ENCODE measurements at regions of chr1 and their contacts with region 1.

Region 1: GRCh38 chr1:7646981-7647901 is 123.9 kb upstream of the VAMP3 start:
- DNase-seq: peak in 1 of 2 experiments; percentile 92
- H3K4me3 ChIP-seq: no peak overlapping the region
- H3K27ac ChIP-seq: no peak overlapping the region
- H3K4me1 ChIP-seq: peaks cover 0 to 4% (median 0%) of the 10 kb centered on the region in 4 experiments; a peak in 2 of 7 replicates
- H3K27me3 ChIP-seq: no peaks in the 10 kb centered on the region
- CTCF ChIP-seq: peak; percentile 76 to 90 (median 81)
- EP300 ChIP-seq: no peak
- POLR2A ChIP-seq: no peak
- RAD21 ChIP-seq: peak; percentile 90 to 91

Region 2: DNA sequence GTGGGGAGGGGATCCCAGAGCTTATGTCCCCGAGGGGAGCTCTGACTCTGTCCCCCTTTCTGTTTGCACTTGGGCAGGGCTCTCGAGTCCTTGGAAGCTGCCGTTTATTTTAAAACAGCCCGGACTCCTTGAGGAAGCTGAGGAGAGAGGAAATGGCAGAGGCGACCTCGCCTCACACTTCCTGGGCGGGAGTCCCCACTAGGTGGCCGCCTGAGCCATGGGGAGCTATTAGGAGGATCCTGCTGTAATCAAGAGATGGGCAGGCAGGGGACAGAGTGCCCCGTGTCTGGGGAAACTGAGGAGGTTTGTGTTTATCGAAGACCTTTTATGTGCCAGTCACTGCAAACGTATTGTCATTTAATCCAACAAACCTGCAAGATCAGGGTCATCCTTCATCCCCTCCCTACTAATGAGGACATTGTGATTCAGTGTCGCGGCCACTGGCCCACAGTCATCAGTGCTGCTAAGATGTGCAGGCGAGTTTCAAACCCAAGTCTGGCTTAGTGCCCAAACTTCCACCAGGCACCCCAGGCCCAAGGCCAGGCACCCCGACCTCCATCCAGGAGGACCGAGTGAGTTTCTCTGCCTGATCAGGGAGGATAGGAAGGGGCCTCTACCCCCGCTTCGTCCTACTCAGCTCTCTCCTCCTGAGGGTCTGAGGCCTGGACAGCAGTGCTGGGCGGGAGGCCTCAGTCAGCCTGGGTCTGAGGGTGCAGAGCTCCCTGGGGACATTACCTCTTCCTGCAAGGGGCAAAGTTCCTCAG is 193.0 kb before region 1 on chr1:
- CTCF ChIA-PET with region 1: interaction called, 10 read pairs
- POLR2A ChIA-PET with region 1: no interaction called
- DNase-seq: no peak
- H3K4me3 ChIP-seq: no peak overlapping the region
- H3K27ac ChIP-seq: no peak overlapping the region
- H3K4me1 ChIP-seq: peaks cover 0 to 13% (median 5%) of the 10 kb centered on the region in 4 experiments; a peak in 5 of 7 replicates
- H3K27me3 ChIP-seq: no peaks in the 10 kb centered on the region
- CTCF ChIP-seq: peak; percentile 36 to 51 (median 42); a peak in 3 of 4 replicates
- EP300 ChIP-seq: no peak
- POLR2A ChIP-seq: no peak
- RAD21 ChIP-seq: peak; percentile 41 to 61; a peak in 3 of 4 replicates

Region 3: DNA sequence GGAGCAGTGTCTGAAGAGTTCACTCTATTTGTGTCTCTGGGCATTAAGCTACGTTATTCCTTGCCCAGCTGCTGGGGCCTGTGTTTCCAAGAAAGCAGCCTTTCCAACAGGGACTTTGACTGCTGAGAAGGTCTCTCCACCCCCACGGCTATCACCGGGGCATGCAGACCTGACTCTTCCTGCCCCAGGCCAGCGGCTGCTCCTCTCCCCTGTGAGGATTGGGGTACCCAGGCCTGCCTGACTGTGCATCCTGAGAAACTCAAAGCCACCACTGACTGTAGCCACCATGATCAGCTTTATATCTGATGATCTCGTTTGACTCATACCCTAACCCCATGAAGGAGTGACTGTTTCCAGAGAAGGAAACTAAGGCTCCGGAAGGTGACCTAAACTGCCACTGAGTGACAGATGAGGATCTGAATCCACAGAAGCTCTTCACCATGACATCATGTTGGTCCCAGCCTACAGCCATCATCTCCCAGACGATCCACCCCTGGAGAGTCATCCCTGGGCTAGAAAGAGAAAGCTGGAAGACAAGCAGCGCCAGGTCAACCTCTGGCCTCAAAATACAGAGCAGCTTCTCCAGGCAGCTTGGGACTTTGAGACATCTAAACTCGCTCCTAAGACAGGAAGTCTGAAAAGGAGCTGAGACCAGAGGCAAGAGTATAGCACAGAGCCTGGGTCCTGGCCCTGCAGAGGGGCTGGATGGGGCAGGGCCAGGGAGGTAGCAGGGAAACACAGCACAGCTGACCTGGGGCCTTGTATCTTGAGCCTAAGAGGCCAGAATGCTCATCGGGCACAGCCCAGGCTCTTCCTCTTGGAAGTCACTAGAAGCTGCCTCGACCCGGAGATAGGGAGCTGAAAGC is 120.1 kb before region 1 on chr1:
- CTCF ChIA-PET with region 1: no interaction called
- POLR2A ChIA-PET with region 1: no interaction called
- DNase-seq: no peak
- H3K4me3 ChIP-seq: no peak overlapping the region
- H3K27ac ChIP-seq: no peak overlapping the region; the same call in 1 of the 2 replicates
- H3K4me1 ChIP-seq: peaks cover 0 to 4% (median 2%) of the 10 kb centered on the region in 4 experiments; a peak in 3 of 7 replicates
- H3K27me3 ChIP-seq: no peaks in the 10 kb centered on the region
- CTCF ChIP-seq: no peak
- EP300 ChIP-seq: no peak
- POLR2A ChIP-seq: no peak
- RAD21 ChIP-seq: no peak

Region 4: GRCh38 chr1:7549277-7550161 is 97.7 kb before region 1 on chr1:
- CTCF ChIA-PET with region 1: interaction called, 11 read pairs
- POLR2A ChIA-PET with region 1: no interaction called
- DNase-seq: no peak
- H3K4me3 ChIP-seq: no peak overlapping the region
- H3K27ac ChIP-seq: no peak overlapping the region
- H3K4me1 ChIP-seq: peaks cover 0 to 14% (median 6%) of the 10 kb centered on the region in 4 experiments; a peak in 6 of 7 replicates
- H3K27me3 ChIP-seq: no peaks in the 10 kb centered on the region
- CTCF ChIP-seq: no peak
- EP300 ChIP-seq: no peak
- POLR2A ChIP-seq: no peak
- RAD21 ChIP-seq: no peak

Region 5: GRCh38 chr1:7576946-7577641 is 70.1 kb before region 1 on chr1:
- CTCF ChIA-PET with region 1: interaction called, 36 read pairs
- POLR2A ChIA-PET with region 1: no interaction called
- DNase-seq: no peak
- H3K4me3 ChIP-seq: no peak overlapping the region
- H3K27ac ChIP-seq: no peak overlapping the region
- H3K4me1 ChIP-seq: no peaks in the 10 kb centered on the region
- H3K27me3 ChIP-seq: no peaks in the 10 kb centered on the region; a peak in 1 of 7 replicates
- CTCF ChIP-seq: peak; percentile 31 to 43 (median 37); a peak in 3 of 4 replicates
- EP300 ChIP-seq: no peak
- POLR2A ChIP-seq: no peak
- RAD21 ChIP-seq: peak; percentile 46 to 51

Region 6: GRCh38 chr1:7628273-7628672 is 19.0 kb before region 1 on chr1:
- CTCF ChIA-PET with region 1: interaction called, 10 read pairs
- POLR2A ChIA-PET with region 1: no interaction called
- DNase-seq: no peak
- H3K4me3 ChIP-seq: no peak overlapping the region
- H3K27ac ChIP-seq: no peak overlapping the region
- H3K4me1 ChIP-seq: peaks cover 0 to 4% (median under 1%) of the 10 kb centered on the region in 4 experiments; a peak in 2 of 7 replicates
- H3K27me3 ChIP-seq: no peaks in the 10 kb centered on the region
- CTCF ChIP-seq: no peak
- EP300 ChIP-seq: no peak
- POLR2A ChIP-seq: no peak
- RAD21 ChIP-seq: no peak

Region 7: GRCh38 chr1:7659514-7659913 is 12.3 kb after region 1 on chr1:
- CTCF ChIA-PET with region 1: interaction called, 14 read pairs
- POLR2A ChIA-PET with region 1: interaction called, 3 read pairs
- DNase-seq: no peak
- H3K4me3 ChIP-seq: no peak overlapping the region
- H3K27ac ChIP-seq: no peak overlapping the region
- H3K4me1 ChIP-seq: no peaks in the 10 kb centered on the region; a peak in 1 of 7 replicates
- H3K27me3 ChIP-seq: no peaks in the 10 kb centered on the region
- CTCF ChIP-seq: no peak
- EP300 ChIP-seq: no peak
- POLR2A ChIP-seq: no peak
- RAD21 ChIP-seq: no peak

Region 8: DNA sequence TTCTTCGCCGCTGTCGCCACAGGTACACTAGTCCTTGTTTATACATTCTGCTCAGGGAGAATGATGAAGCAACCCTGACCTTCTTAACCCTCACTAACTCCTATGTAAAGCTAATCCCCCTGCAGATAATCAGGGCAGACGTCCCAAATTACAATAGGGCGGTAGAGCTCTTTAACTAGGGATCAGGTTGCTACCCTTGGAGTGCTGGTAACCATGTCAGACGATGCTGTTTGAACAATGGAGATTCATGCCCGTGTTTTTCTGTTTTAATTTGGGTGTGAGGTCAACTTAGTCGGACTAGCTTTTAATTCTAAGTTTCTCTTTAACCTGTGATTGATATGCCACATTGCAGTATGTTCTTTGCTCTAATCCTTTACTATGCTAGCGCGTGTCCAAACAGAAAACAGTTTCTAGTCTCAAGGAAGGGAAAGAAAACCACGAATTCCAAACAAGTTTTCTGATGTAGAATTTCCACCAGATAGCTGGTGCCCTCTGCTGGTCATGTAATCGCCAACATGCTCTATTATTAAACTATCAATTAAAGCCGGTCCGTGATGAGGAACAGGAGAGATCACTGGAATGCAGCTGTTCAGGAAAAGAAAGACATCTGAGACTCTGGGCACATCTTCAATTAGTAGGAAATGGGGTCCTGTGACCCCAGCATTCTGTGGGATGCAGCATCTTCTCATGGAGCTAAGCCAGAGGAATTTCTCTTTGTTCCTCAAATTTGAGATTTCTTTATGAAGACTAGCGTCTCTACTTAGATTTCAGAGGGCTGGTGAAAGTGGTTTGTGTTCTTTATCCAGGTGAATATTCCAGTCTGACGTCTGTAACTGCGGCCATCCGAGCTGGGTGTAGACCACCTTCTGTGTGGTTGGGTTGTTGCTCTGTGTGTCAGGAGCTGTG is 105.5 kb after region 1 on chr1:
- CTCF ChIA-PET with region 1: interaction called, 14 read pairs
- POLR2A ChIA-PET with region 1: no interaction called
- DNase-seq: peak in 1 of 2 experiments; percentile 62
- H3K4me3 ChIP-seq: peak overlapping the region; percentile 22 to 53 (median 36); a peak in 7 of 8 replicates
- H3K27ac ChIP-seq: no peak overlapping the region
- H3K4me1 ChIP-seq: peaks cover 3 to 9% (median 6%) of the 10 kb centered on the region in 4 experiments; a peak in 6 of 7 replicates
- H3K27me3 ChIP-seq: no peaks in the 10 kb centered on the region
- CTCF ChIP-seq: peak in 2 of 3 experiments; percentile 75; a peak in 3 of 4 replicates
- EP300 ChIP-seq: no peak
- POLR2A ChIP-seq: no peak
- RAD21 ChIP-seq: peak; percentile 72 to 81